ENCODE measurements at regions of chr11 and their contacts with region 1.

Region 1: DNA sequence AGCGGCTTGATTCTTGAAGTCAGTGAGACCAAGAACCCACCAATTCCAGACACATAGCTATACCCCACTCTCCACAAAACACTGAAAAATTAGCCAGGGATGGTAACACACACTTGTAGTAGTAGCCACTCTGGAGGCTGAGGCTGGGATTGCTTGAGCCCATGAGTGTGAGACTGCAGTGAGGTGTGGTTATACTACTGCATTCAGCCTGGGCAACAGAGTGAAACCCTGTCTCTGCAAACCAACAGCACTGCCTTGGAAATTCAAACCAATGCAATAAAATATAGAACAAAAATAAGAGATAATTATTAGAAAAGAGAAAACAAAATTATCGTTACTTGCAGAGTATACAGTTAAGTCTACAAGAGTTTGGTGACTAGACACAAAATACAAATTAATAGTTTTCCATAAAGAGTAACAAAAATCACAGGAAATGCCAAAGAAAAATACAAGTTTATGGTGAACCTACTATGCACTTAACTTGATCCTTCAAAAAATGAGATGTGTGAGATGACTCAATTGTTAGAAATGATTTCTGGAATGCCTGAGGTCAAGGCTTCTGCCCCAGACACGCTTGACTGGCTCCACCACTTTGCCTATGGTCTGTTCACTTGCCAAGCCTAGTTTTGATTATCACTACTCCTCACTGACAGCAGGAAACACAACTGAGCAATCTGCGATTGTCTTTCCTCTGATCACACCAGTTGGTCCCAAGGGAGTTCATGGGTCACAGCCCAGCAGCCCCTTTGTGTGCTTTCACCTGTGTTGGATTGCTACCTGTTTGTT is 20.4 kb upstream of the PRDM10 start:
- DNase-seq: no peak
- ATAC-seq: no peak
- H3K4me3 ChIP-seq: no peak overlapping the region
- H3K4me3 Mint-ChIP-seq: no peak overlapping the region
- H3K27ac ChIP-seq: no peak overlapping the region
- H3K27ac Mint-ChIP-seq: no peak overlapping the region
- H3K4me1 ChIP-seq: no peaks in the 10 kb centered on the region
- H3K4me1 Mint-ChIP-seq: no peaks in the 10 kb centered on the region
- H3K27me3 ChIP-seq: peaks cover 0 to 4% of the 10 kb centered on the region in 2 experiments
- H3K27me3 Mint-ChIP-seq: no peaks in the 10 kb centered on the region

Region 2: GRCh38 chr11:130006929-130007328 is 16.1 kb before region 1 on chr11:
- CTCF ChIA-PET with region 1: no interaction called
- POLR2A ChIA-PET with region 1: no interaction called
- DNase-seq: no peak
- ATAC-seq: no peak
- H3K4me3 ChIP-seq: no peak overlapping the region
- H3K4me3 Mint-ChIP-seq: no peak overlapping the region
- H3K27ac ChIP-seq: no peak overlapping the region
- H3K27ac Mint-ChIP-seq: no peak overlapping the region
- H3K4me1 ChIP-seq: peaks cover 4 to 13% of the 10 kb centered on the region in 2 experiments
- H3K4me1 Mint-ChIP-seq: peaks cover 7 to 17% (median 16%) of the 10 kb centered on the region in 3 donors
- H3K27me3 ChIP-seq: peaks cover 0 to 4% of the 10 kb centered on the region in 2 experiments
- H3K27me3 Mint-ChIP-seq: peaks cover 3 to 4% of the 10 kb centered on the region in 2 donors

Region 3: DNA sequence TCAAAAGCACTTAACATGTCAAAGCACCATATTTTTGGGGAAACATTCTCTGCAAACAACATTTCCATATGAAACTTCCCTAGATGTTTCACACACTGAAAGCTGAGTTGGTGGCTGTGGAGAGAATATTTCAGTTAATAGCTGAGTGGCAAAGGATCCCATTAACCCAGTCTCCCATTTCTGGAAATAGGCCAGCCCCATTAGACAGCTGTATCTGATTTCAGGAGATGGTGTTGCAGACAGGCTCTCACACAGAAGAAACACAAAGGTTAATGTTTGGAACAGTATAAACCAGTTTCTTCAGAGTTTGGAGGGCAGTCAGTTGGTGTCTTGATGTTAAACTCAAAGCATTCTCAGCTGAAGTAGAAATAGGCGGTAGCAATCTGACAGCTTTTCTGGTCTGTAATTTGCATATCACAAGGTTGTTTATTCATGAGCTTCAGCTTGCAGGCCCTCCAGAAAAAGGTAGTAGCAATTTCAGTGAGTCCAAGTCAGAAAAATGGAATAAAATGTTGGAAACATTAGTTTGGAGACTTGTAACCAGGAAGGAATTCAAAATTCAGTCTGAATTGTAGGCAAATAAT is 307.2 kb after region 1 on chr11:
- CTCF ChIA-PET with region 1: no interaction called
- POLR2A ChIA-PET with region 1: interaction called in 1 of 2 experiments, 14 read pairs
- DNase-seq: no peak
- ATAC-seq: no peak
- H3K4me3 ChIP-seq: no peak overlapping the region
- H3K4me3 Mint-ChIP-seq: no peak overlapping the region
- H3K27ac ChIP-seq: no peak overlapping the region
- H3K27ac Mint-ChIP-seq: no peak overlapping the region
- H3K4me1 ChIP-seq: no peaks in the 10 kb centered on the region
- H3K4me1 Mint-ChIP-seq: no peaks in the 10 kb centered on the region
- H3K27me3 ChIP-seq: peaks cover 0 to 4% of the 10 kb centered on the region in 2 experiments
- H3K27me3 Mint-ChIP-seq: no peaks in the 10 kb centered on the region